ENCODE measurements at regions of chr7 and their contacts with region 1.

Region 1: DNA sequence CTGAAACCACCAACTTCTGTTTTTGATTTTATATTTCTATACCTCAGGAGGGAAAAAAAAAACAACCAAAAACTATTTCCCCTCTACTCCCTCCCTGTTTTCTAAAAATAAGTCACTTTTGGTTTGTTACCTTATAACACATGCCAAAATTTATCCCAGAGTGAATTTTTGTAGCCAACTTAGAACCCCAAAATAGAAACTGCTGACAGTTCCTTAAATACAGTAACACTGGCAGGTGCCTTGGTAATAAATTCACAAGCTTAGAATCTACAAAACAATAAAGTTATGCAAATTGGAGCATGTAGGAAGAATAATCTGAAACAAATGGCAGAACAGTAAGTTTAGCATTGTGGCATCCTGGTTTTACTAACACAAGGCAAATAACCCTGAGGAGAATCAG is 165.0 kb upstream of the HDAC9 start:
- DNase-seq: no peak
- ATAC-seq: peak in 1 of 4 donors; percentile 47
- H3K4me3 ChIP-seq: no peak overlapping the region
- H3K27ac ChIP-seq: peak overlapping the region in 1 of 12 donors; percentile 20
- H3K4me1 ChIP-seq: peaks cover 0 to 14% (median 1%) of the 10 kb centered on the region in 12 donors
- H3K27me3 ChIP-seq: no peaks in the 10 kb centered on the region
- CTCF ChIP-seq: no peak
- POLR2A ChIP-seq: no peak

Region 2: GRCh38 chr7:17986851-17987250 is 343.7 kb before region 1 on chr7:
- intact Hi-C with region 1: loop called in 2 of 10 experiments (anchors 5 to 10 kb)
- DNase-seq: no peak
- ATAC-seq: peak in 3 of 4 donors; percentile 42 to 63 (median 54)
- H3K4me3 ChIP-seq: no peak overlapping the region
- H3K27ac ChIP-seq: peak overlapping the region in 7 of 12 donors; percentile 9 to 75 (median 51)
- H3K4me1 ChIP-seq: peaks cover 0 to 12% (median 0%) of the 10 kb centered on the region in 12 donors
- H3K27me3 ChIP-seq: no peaks in the 10 kb centered on the region
- CTCF ChIP-seq: no peak
- POLR2A ChIP-seq: no peak

Region 3: GRCh38 chr7:18429547-18429946 is 99.0 kb after region 1 on chr7:
- intact Hi-C with region 1: no loop called
- DNase-seq: no peak
- ATAC-seq: no peak
- H3K4me3 ChIP-seq: no peak overlapping the region
- H3K27ac ChIP-seq: no peak overlapping the region
- H3K4me1 ChIP-seq: peaks cover 0 to 15% (median 0%) of the 10 kb centered on the region in 12 donors
- H3K27me3 ChIP-seq: no peaks in the 10 kb centered on the region
- CTCF ChIP-seq: no peak
- POLR2A ChIP-seq: no peak